ENCODE measurements at regions of chr4 and their contacts with region 1.

Region 1: GRCh38 chr4:139177868-139178611 is 1.0 kb upstream of the ELF2 start:
- DNase-seq: peak; percentile 96 to 98
- H3K4me3 ChIP-seq: peak overlapping the region; percentile 86 to 99 (median 92)
- H3K27ac ChIP-seq: peak overlapping the region; percentile 98 to 100 (median 100)
- H3K4me1 ChIP-seq: peaks cover 5 to 29% (median 21%) of the 10 kb centered on the region in 4 donors
- H3K27me3 ChIP-seq: no peaks in the 10 kb centered on the region
- CTCF ChIP-seq: no peak
- EP300 ChIP-seq: no peak
- POLR2A ChIP-seq: peak in 2 of 4 donors; percentile 19 to 88

Region 2: GRCh38 chr4:139099366-139099982 is 78.6 kb before region 1 on chr4:
- intact Hi-C with region 1: loop called (anchors 5 kb)
- DNase-seq: peak; percentile 69 to 95
- H3K4me3 ChIP-seq: no peak overlapping the region
- H3K27ac ChIP-seq: no peak overlapping the region
- H3K4me1 ChIP-seq: peaks cover 0 to 27% (median 5%) of the 10 kb centered on the region in 4 donors
- H3K27me3 ChIP-seq: no peaks in the 10 kb centered on the region
- CTCF ChIP-seq: peak in 5 of 7 experiments; percentile 72 to 85 (median 79)
- EP300 ChIP-seq: no peak
- POLR2A ChIP-seq: no peak

Region 3: GRCh38 chr4:139282065-139282720 is 104.2 kb after region 1 on chr4:
- intact Hi-C with region 1: no loop called
- DNase-seq: no peak
- H3K4me3 ChIP-seq: no peak overlapping the region
- H3K27ac ChIP-seq: no peak overlapping the region
- H3K4me1 ChIP-seq: peaks cover 0 to 17% (median 15%) of the 10 kb centered on the region in 4 donors
- H3K27me3 ChIP-seq: peaks cover 0 to 37% (median 24%) of the 10 kb centered on the region in 3 donors
- CTCF ChIP-seq: no peak
- EP300 ChIP-seq: no peak
- POLR2A ChIP-seq: no peak

Measured in stomach (tissue), 19 donors.